ENCODE measurements at regions of chr3 and their contacts with region 1.

Region 1: DNA sequence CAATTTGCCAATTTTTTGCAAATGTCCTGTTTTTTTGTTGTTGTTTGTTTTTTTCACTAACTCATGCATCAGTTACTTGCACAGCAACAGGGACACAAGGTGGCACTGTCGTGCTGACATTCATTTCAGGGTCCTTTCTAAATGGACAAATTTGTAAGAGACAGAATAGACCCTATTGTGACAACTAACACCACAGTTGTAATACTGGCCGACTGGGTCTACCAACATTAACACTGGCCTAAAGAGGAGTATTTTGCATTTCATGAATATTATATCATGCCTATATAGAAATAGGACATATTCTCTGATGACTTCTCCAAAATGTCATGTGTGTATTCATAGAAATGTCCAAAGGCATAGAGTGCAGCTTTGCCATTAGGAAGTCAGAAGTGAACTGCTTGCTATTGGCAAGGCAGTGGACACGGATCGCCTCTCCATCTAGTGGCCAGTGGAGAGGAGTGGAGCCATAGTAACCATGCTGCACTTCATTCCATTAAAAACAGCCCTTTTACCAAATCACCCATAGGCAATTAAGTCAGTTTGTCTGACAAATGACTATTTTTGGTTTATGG is 54.8 kb downstream of the ZBTB20 start:
- DNase-seq: peak; percentile 50
- H3K4me3 Mint-ChIP-seq: no peak overlapping the region
- H3K27ac Mint-ChIP-seq: no peak overlapping the region
- H3K4me1 Mint-ChIP-seq: peaks cover 1% of the 10 kb centered on the region
- H3K27me3 Mint-ChIP-seq: no peaks in the 10 kb centered on the region
- CTCF ChIP-seq: peak; percentile 44

Region 2: GRCh38 chr3:114827495-114827894 is 264.8 kb before region 1 on chr3:
- CTCF ChIA-PET with region 1: interaction called, 8 read pairs
- POLR2A ChIA-PET with region 1: no interaction called
- intact Hi-C with region 1: loop called (anchors 1 kb)
- DNase-seq: peak; percentile 50
- H3K4me3 Mint-ChIP-seq: no peak overlapping the region
- H3K27ac Mint-ChIP-seq: no peak overlapping the region
- H3K4me1 Mint-ChIP-seq: no peaks in the 10 kb centered on the region
- H3K27me3 Mint-ChIP-seq: no peaks in the 10 kb centered on the region
- CTCF ChIP-seq: peak; percentile 64

Region 3: DNA sequence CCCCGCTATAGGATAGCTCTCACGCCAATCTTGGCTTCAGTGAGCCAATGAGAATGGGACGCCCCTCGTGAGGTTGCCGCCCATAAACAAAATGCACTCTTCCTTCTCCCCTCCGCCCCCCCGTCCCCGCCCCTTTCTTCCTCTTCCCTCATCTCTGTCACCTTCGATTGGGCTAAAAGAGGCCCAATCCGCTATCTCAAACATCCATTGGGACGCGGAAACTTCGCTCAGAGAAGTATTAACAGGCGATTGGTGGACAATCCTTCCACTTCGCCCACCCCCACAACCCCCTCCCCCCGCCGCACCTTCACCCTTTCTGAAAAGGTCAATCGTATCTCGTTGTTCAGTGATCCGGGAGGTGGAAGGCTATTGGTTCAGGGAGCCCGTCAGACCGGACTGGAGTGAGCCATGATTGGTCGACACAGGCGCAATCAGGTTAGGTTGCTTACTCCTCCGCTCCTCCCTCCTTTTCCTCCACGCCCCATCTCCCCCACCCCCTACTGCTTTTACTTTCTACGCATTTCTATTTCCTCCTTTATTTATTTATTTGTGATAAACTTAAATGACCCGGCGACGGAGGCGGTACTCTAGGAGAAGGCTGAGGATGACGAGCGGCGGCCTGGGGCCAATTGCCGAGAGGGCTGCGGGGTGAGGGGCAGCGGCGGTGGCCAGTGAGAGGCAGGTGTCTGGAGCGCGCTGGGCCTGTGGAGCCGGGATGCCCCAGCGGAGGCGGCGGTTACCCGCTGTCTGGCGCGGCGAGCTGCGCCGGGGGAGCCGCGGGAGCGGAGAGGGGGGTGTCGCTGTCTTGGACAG is 55.2 kb after region 1 on chr3:
- CTCF ChIA-PET with region 1: interaction called, 4 read pairs
- POLR2A ChIA-PET with region 1: interaction called, 15 read pairs
- intact Hi-C with region 1: loop called (anchors 5 kb)
- DNase-seq: peak; percentile 100
- H3K4me3 Mint-ChIP-seq: peak overlapping the region; percentile 82
- H3K27ac Mint-ChIP-seq: peak overlapping the region; percentile 97
- H3K4me1 Mint-ChIP-seq: peaks cover 6% of the 10 kb centered on the region
- H3K27me3 Mint-ChIP-seq: no peaks in the 10 kb centered on the region
- CTCF ChIP-seq: no peak

Region 4: DNA sequence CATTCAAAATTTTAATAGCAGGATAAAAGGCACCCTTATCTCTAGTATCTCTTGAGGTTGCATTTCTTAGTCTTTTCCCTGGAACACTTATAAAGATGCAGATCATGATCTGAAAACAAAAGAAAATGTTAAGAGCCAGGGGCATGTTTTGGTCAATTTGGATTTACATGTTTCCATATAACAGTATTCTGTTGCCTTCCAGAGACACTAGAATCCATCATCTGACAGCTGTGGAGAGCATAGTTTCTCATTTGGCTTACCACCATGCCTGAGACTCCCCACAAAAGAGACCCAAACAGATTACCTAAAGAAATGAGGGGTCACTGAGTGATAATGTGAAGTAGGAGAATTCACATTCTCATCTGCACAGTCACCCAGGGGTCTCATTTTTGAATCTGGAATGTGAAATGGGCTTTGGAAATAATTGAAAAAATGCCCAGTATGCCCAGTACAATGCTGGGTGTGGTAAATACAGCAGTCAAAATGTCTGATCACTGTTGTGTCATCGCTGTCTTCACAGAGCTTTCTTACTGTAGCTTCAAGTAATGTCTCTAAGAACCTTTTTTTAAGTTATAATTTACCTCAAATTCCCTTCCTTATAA is 134.6 kb after region 1 on chr3:
- CTCF ChIA-PET with region 1: no interaction called
- POLR2A ChIA-PET with region 1: no interaction called
- intact Hi-C with region 1: no loop called
- DNase-seq: no peak
- H3K4me3 Mint-ChIP-seq: no peak overlapping the region
- H3K27ac Mint-ChIP-seq: no peak overlapping the region
- H3K4me1 Mint-ChIP-seq: no peaks in the 10 kb centered on the region
- H3K27me3 Mint-ChIP-seq: no peaks in the 10 kb centered on the region
- CTCF ChIP-seq: no peak

Region 5: DNA sequence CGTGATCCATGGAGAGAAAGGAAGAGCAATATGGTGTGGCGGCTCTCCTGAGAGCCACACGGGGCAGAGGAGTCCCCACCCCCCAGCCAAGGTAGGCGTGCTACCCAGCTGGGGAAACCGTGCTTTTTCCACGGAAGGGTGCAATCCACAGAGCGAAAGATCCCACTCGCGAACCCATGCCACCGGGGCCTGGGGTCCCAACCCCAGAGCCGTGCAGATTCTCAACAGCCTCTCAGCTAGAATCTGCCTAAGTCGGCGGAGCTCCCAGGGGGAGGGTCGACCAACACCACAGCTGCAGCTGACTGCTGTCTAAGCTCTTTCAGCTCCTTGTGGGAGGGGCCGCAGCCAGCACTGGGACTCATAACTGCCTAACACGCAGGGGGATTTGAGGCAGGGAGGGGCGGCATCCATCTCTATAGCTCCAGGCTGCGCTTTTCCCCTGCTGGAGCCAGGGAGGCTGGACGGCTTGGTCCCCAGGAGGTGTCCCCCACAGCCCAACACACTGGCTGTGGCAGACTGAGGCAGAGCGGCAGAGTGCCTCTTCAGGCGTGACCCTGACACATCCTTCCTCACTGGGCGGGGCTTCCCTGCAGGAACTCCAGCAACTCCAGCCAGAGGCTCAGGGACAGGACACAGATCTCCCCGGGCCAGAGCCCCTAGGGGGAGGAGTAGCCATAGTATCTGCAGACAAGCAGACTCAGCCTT is 162.3 kb after region 1 on chr3:
- CTCF ChIA-PET with region 1: no interaction called
- POLR2A ChIA-PET with region 1: no interaction called
- intact Hi-C with region 1: no loop called
- DNase-seq: no peak
- H3K4me3 Mint-ChIP-seq: no peak overlapping the region
- H3K27ac Mint-ChIP-seq: no peak overlapping the region
- H3K4me1 Mint-ChIP-seq: no peaks in the 10 kb centered on the region
- H3K27me3 Mint-ChIP-seq: no peaks in the 10 kb centered on the region
- CTCF ChIP-seq: no peak

Region 6: DNA sequence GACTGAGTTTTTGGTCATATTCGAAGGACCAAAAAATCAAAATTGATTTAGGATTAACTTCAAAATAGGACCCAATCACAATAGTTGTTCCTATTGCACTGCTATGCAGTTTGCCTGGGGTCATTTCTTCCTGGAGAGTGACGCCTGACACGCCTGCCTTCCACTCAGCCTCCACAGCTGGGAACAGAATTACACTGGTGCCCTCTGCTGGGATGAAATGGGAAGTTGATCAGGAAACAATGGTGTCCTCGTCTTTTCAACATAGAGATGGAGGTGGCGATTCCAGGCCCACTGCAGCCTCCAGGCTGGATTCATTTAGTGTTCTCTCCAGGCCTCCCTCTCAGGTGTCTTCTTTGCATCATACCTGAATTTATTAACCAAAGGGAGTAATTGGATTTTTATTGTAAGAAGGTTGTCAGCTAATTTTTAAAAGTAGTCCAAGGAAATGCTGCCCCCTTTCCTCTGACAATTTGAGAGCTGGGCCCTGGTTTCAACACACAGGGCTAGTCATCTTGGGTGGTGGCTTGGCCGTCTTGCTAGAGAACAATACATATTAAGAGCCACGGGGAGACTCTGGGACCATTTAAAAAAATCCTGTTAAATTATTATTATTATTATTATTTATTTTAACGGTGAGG is 600.7 kb after region 1 on chr3:
- CTCF ChIA-PET with region 1: interaction called, 11 read pairs
- POLR2A ChIA-PET with region 1: interaction called, 3 read pairs
- intact Hi-C with region 1: loop called (anchors 1 kb)
- DNase-seq: peak; percentile 88
- H3K4me3 Mint-ChIP-seq: no peak overlapping the region
- H3K27ac Mint-ChIP-seq: no peak overlapping the region
- H3K4me1 Mint-ChIP-seq: peaks cover 21% of the 10 kb centered on the region
- H3K27me3 Mint-ChIP-seq: no peaks in the 10 kb centered on the region
- CTCF ChIP-seq: peak; percentile 83